Heart left ventricle (tissue), 16 donors: ENCODE measurements at regions of chr14 and their contacts with region 1.

Region 1: GRCh38 chr14:56555921-56556570 is 23.6 kb upstream of the TMEM260 start:
- DNase-seq: no peak
- ATAC-seq: no peak
- H3K4me3 ChIP-seq: no peak overlapping the region
- H3K27ac ChIP-seq: no peak overlapping the region
- H3K4me1 ChIP-seq: no peaks in the 10 kb centered on the region
- H3K27me3 ChIP-seq: peaks cover 0 to 54% (median 7%) of the 10 kb centered on the region in 9 donors
- CTCF ChIP-seq: peak in 9 of 12 donors; percentile 6 to 41 (median 24)
- POLR2A ChIP-seq: no peak

Region 2: DNA sequence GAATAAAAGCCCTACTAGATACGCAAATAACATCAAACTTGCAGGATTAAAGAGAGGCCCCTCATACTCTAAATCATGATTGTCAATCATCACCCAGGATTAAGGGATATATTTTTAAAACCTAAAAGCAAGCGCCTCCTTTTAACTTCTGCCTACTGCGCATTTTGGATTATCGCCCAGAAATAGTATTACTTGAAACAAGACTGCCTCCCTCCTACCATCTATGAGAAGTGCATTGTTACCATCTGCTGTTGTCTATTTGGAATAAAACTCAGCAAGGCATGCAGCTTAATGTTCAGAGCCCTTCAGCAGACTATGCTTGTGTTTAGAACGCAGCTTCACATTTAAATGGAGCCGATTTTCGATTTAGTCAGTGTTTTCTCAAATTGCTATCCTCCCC is 633.0 kb after region 1 on chr14:
- intact Hi-C with region 1: loop called in 1 of 10 experiments (anchors 5 kb)
- DNase-seq: no peak
- ATAC-seq: no peak
- H3K4me3 ChIP-seq: no peak overlapping the region
- H3K27ac ChIP-seq: no peak overlapping the region
- H3K4me1 ChIP-seq: no peaks in the 10 kb centered on the region
- H3K27me3 ChIP-seq: peaks cover 0 to 8% (median 0%) of the 10 kb centered on the region in 9 donors
- CTCF ChIP-seq: peak in 2 of 12 donors; percentile 13
- POLR2A ChIP-seq: no peak